Activated CD4-positive, alpha-beta T cell treated with anti-CD3 and anti-CD28 coated beads for 36 hours (primary cell): ENCODE measurements at regions of chr5 and their contacts with region 1.

Region 1: GRCh38 chr5:37111426-37112382 is 137.5 kb downstream of the CPLANE1 start:
- DNase-seq: peak; percentile 23
- ATAC-seq: peak; percentile 75
- H3K4me3 Mint-ChIP-seq: peak overlapping the region; percentile 24
- H3K27ac Mint-ChIP-seq: peak overlapping the region; percentile 65
- H3K4me1 Mint-ChIP-seq: peaks cover 35% of the 10 kb centered on the region
- H3K27me3 Mint-ChIP-seq: peaks cover 11% of the 10 kb centered on the region

Region 2: DNA sequence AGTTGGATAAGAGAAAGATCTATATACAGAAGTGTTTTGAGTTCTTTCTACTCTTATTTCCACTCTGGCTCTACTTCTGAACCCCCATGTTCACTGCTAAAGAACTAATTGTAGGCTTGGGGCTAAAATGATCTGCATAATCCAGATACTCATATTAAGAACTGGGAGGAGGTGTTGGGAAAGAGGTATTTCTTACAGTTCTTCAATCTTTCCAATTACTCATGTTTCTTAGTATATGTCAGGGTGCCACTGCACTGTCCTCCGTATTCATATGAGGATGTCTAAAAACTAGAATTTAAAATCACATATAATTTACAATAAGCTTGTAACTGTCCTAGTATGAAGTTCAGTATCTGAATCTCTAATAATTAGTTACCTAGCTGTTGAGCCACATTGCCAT is 222.4 kb before region 1 on chr5:
- CTCF ChIA-PET with region 1: no interaction called
- POLR2A ChIA-PET with region 1: no interaction called
- intact Hi-C with region 1: loop called in 1 of 2 experiments (anchors 1 kb)
- DNase-seq: no peak
- ATAC-seq: peak; percentile 97
- H3K4me3 Mint-ChIP-seq: no peak overlapping the region
- H3K27ac Mint-ChIP-seq: peak overlapping the region; percentile 67
- H3K4me1 Mint-ChIP-seq: peaks cover 67% of the 10 kb centered on the region
- H3K27me3 Mint-ChIP-seq: no peaks in the 10 kb centered on the region

Region 3: DNA sequence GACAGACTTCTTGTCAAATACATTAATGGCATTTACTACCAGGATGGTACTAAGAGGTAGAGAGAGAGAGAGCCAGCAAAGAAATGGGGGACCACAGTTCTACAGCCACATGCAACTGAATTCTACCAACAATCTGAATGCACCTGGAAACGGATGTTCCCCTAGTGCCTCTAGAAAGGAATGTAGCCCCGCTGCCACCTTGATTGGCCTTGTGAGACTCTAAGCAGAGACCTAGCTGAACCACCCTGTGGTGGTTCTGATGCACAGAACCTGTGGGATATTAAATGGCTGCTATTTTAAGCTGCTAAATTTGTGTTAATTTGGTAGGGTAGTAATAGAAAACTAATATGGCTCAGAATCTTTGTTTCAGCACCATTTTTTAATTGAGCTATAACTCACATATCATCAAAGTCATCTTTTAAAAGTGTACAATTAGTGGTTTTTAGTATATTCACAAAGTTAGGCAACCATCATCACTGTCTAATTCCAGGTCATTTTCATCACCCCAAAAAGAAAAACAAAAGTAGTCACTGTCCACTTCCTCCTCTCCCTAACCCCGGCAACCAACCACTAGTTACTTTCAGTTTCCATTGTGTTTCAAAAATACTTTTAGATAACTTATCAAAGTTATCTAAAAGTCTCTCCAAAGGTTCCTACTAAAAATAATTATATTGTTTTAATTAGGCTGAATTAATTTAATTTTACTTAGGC is 85.8 kb after region 1 on chr5:
- CTCF ChIA-PET with region 1: no interaction called
- POLR2A ChIA-PET with region 1: no interaction called
- intact Hi-C with region 1: loop called in 1 of 2 experiments (anchors 5 kb)
- DNase-seq: no peak
- ATAC-seq: peak; percentile 60
- H3K4me3 Mint-ChIP-seq: peak overlapping the region; percentile 9
- H3K27ac Mint-ChIP-seq: peak overlapping the region; percentile 5
- H3K4me1 Mint-ChIP-seq: peaks cover 20% of the 10 kb centered on the region
- H3K27me3 Mint-ChIP-seq: no peaks in the 10 kb centered on the region

Region 4: GRCh38 chr5:37448941-37449340 is 337.2 kb after region 1 on chr5:
- CTCF ChIA-PET with region 1: no interaction called
- POLR2A ChIA-PET with region 1: no interaction called
- intact Hi-C with region 1: loop called in 1 of 2 experiments (anchors 10 kb)
- DNase-seq: no peak
- ATAC-seq: no peak
- H3K4me3 Mint-ChIP-seq: no peak overlapping the region
- H3K27ac Mint-ChIP-seq: no peak overlapping the region
- H3K4me1 Mint-ChIP-seq: peaks cover 5% of the 10 kb centered on the region
- H3K27me3 Mint-ChIP-seq: no peaks in the 10 kb centered on the region